Activated CD4-positive, alpha-beta T cell treated with anti-CD3 and anti-CD28 coated beads for 36 hours (primary cell): ENCODE measurements at regions of chr1 and their contacts with region 1.

Region 1: DNA sequence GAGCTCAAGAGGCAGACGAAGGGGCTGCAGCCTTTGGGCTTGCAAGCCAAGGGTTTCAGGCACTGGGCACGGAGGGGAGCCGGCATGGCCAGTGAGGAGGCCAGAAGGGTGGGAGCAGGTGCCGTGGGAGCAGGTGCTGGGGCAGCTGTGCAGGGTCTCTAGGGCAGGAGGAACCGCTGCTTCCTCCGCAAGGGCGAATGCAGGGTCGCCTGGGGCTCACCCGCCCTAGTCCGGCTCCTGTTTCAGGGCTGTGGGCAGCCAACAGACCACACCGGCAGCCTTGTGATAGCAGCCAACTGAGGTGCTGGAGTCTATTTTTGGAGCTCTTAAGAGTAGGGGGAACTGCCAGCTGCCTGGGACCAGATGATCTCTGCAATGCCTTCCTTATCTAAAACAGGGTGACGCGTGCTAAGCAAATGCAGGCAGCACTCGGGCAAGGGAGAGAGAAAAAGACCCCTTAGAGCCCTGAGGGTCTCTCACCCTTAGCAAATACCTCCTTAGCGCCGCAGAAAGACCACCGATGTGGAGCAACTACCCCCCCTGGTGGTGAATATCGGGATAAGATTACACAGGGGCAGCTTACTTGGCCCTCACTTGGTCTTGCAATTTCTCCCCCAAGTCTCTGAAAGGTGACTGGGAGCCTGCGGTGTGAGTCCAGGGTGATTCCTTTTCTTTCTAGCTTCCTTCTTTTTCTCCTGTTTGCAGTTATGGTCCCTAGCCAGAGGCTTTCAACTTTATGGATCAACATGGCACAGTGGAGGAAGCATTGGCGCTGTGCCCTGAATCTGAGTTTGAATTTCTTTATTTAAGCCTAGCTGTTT is 20.7 kb upstream of the MAPKAPK2 start:
- DNase-seq: peak; percentile 83
- ATAC-seq: peak; percentile 70
- H3K4me3 Mint-ChIP-seq: no peak overlapping the region
- H3K27ac Mint-ChIP-seq: no peak overlapping the region
- H3K4me1 Mint-ChIP-seq: peaks cover 28% of the 10 kb centered on the region
- H3K27me3 Mint-ChIP-seq: peaks cover 23% of the 10 kb centered on the region

Region 2: DNA sequence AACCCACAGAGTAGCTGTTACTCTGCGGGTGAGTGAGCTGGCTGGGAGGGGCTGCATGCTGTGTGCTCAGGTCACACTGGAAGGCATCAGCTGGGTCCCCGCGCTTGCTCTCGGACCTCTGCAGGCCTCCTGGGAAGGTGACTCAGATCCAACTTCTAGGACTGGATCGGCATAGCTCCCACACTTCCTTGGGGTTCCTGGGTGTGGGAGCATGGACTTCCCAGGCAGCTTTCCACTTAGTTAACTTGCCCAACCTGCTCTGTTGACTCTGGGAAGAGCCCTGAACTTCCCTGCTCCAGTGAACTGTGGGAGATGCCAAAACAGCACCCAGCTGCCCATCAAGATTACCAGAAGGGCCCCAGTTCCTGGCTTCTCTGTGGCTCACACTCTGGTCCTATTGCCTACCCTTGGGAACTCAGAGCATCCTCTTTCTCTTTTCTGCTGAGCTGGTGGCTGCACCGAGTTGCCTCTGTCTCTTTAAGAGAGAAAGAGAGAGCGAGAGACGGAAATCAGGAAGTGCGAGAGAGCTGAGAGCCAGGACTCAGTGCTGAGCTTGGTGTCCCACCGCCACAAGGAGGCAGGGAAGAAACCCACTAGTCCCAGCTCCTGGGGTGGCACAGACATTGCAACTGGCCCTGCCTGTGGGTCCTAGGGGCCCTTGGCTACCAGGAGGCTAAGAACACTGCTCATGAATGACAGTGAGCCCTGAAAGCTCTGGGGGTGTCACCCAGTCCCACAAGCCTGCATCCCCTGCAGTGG is 193.9 kb before region 1 on chr1 and contains the start of gene IKBKE:
- CTCF ChIA-PET with region 1: interaction called, 22 read pairs
- POLR2A ChIA-PET with region 1: no interaction called
- intact Hi-C with region 1: no loop called
- DNase-seq: peak; percentile 74
- ATAC-seq: peak; percentile 53
- H3K4me3 Mint-ChIP-seq: peak within 1 kb of the TSS; percentile 83
- H3K27ac Mint-ChIP-seq: peak within 1 kb of the TSS; percentile 91
- H3K4me1 Mint-ChIP-seq: peaks cover 92% of the 10 kb centered on the region
- H3K27me3 Mint-ChIP-seq: no peaks in the 10 kb centered on the region
- total RNA-seq, gene IKBKE: 15.3 to 17.2 TPM

Region 3: DNA sequence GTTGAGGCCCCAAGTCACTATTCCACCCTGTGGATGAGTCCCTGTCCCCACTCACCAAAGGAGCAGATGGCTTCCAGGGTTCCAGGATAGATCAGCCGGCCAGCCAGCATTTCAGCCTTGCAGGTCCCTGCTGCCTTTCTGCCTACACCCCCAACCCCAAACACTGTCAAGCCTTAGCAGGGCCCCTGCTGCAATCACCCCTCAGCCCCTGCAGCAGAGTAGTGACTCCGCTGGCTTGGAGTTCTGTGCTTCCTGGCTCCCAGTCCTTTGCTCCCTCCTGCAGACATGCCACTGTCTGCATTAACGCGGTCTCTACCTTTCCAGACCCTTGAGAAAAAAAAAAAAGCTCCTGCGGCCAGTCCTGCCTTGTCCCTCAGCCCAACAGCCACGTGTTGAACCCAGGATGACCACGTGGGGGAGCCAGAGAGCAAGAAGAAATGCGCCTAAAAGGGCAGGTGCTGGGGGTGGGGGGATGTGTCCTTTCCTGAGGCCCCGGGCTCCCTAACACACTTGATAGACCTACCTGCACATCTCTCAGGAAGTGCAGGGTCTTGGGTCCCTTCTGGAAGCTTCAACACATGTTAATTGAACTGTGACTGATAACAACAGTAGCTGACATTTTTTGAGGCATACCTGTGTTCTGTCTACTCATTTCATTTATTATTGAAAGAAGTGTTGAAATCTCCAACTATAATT is 119.3 kb before region 1 on chr1:
- CTCF ChIA-PET with region 1: interaction called, 26 read pairs
- POLR2A ChIA-PET with region 1: no interaction called
- intact Hi-C with region 1: loop called in 1 of 2 experiments (anchors 2 kb)
- DNase-seq: peak; percentile 90
- ATAC-seq: peak; percentile 80
- H3K4me3 Mint-ChIP-seq: no peak overlapping the region
- H3K27ac Mint-ChIP-seq: peak overlapping the region; percentile 55
- H3K4me1 Mint-ChIP-seq: peaks cover 26% of the 10 kb centered on the region
- H3K27me3 Mint-ChIP-seq: no peaks in the 10 kb centered on the region

Region 4: GRCh38 chr1:206612129-206612876 is 51.7 kb before region 1 on chr1 and contains the start of gene EIF2D:
- CTCF ChIA-PET with region 1: interaction called, 89 read pairs
- POLR2A ChIA-PET with region 1: no interaction called
- intact Hi-C with region 1: loop called (anchors 1 kb)
- DNase-seq: peak; percentile 98
- ATAC-seq: peak; percentile 87
- H3K4me3 Mint-ChIP-seq: peak within 1 kb of the TSS; percentile 92
- H3K27ac Mint-ChIP-seq: peak within 1 kb of the TSS; percentile 94
- H3K4me1 Mint-ChIP-seq: peaks cover 40% of the 10 kb centered on the region
- H3K27me3 Mint-ChIP-seq: no peaks in the 10 kb centered on the region
- total RNA-seq, gene EIF2D: 91.2 to 100 TPM

Region 5: DNA sequence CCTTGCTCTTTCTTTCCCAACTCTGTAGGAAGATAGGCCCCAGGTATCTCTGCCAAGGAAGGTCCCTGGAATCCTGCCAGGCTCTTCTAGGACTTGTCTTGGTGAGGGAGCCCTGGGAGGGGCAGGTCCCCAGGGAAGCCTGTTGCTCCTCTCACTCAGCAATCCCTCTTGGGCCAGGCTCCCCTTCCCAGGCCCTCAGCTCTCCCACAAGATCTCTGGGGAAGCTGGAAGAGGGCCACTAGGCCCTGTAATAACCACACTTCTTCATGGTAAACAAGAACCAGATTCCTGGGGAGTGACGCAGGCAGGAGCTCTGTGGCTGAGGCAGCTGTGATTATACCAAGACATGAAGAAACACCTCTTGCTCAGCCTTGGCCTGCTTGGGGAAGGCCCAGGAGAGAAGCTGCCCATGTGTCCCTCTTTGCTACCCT is 10.7 kb after region 1 on chr1:
- CTCF ChIA-PET with region 1: interaction called, 63 read pairs
- POLR2A ChIA-PET with region 1: interaction called, 3 read pairs
- intact Hi-C with region 1: no loop called
- DNase-seq: no peak
- ATAC-seq: no peak
- H3K4me3 Mint-ChIP-seq: no peak overlapping the region
- H3K27ac Mint-ChIP-seq: no peak overlapping the region
- H3K4me1 Mint-ChIP-seq: peaks cover 11% of the 10 kb centered on the region
- H3K27me3 Mint-ChIP-seq: peaks cover 4% of the 10 kb centered on the region

Region 6: DNA sequence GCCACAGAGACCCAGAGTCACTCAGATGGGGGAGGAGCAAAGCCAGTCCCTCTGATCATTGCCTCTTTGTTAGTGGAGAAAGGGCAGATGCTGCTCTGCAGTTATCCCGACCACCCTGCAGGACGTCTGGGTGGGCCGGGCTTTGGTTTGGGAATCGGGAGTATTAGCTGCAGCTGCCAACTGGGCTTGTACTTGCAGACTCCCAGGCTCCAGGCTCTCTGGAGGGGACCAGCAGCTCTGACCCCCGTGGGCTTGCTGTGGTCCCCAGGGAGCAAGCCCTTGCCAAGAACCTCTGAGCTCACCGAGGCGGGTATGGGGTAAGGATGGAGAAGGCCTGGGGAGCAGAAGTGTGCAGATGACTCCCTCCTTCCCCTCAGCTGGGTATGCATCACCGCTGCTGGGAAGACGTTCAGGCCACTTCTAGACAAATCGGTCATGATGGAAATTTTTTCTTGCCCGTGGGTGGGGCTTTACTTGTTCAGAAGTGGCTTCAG is 42.3 kb after region 1 on chr1:
- CTCF ChIA-PET with region 1: interaction called, 42 read pairs
- POLR2A ChIA-PET with region 1: no interaction called
- intact Hi-C with region 1: no loop called
- DNase-seq: peak; percentile 88
- ATAC-seq: peak; percentile 74
- H3K4me3 Mint-ChIP-seq: no peak overlapping the region
- H3K27ac Mint-ChIP-seq: peak overlapping the region; percentile 63
- H3K4me1 Mint-ChIP-seq: peaks cover 86% of the 10 kb centered on the region
- H3K27me3 Mint-ChIP-seq: no peaks in the 10 kb centered on the region

Region 7: GRCh38 chr1:206816390-206817287 is 152.6 kb after region 1 on chr1:
- CTCF ChIA-PET with region 1: no interaction called
- POLR2A ChIA-PET with region 1: no interaction called
- intact Hi-C with region 1: no loop called
- DNase-seq: peak; percentile 38
- ATAC-seq: peak; percentile 96
- H3K4me3 Mint-ChIP-seq: peak overlapping the region; percentile 10
- H3K27ac Mint-ChIP-seq: peak overlapping the region; percentile 83
- H3K4me1 Mint-ChIP-seq: peaks cover 26% of the 10 kb centered on the region
- H3K27me3 Mint-ChIP-seq: peaks cover 2% of the 10 kb centered on the region

Region 8: GRCh38 chr1:207004981-207005830 is 341.2 kb after region 1 on chr1:
- CTCF ChIA-PET with region 1: no interaction called
- POLR2A ChIA-PET with region 1: no interaction called
- intact Hi-C with region 1: no loop called
- DNase-seq: peak; percentile 64
- ATAC-seq: peak; percentile 57
- H3K4me3 Mint-ChIP-seq: no peak overlapping the region
- H3K27ac Mint-ChIP-seq: no peak overlapping the region
- H3K4me1 Mint-ChIP-seq: peaks cover 2% of the 10 kb centered on the region
- H3K27me3 Mint-ChIP-seq: peaks cover 4% of the 10 kb centered on the region